Vagina (tissue), 2 donors: ENCODE measurements at regions of chr19 and their contacts with region 1.

Region 1: DNA sequence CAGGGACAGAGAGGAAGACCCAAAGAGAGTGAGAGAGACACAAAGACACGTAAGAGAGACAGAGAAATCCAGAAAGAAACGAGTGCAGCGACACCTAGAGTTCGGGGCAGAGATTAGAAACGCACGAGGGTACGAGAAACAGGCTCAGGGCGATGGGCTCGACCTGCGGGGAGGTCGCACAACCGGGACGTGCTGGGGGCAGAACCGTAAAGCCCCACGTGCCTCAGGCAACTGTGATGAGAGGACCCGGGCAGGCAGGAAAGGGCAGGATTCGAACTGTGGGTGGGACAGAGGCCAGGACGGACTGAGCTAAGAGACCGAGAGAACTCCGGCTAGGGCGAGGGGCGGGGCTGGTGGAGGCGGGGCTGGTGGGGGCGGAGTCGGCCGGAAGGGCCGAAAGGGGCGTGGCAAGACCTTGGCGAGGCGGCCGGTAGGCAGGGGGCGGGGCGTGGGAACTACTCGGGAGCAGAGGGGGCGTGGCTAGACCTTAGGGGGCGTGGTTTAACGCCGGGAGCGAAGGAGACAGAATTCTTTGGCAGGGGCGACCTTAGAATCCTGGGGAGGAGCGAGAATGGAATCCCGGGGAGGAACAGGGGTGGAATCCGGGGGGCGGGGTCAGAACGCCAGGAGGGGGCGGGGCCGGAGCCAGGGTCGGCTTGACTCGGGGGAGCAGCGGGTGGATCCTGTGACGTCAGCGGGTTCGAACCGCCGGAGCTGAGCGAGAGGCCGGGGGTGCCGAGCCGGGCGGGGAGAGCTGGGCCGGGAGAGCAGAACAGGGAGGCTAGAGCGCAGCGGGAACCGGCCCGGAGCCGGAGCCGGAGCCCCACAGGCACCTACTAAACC is at the start of gene NECTIN2:
- DNase-seq: peak; percentile 99
- H3K4me3 ChIP-seq: peak within 1 kb of the TSS; percentile 90 to 97
- H3K27ac ChIP-seq: peak within 1 kb of the TSS; percentile 94
- H3K4me1 ChIP-seq: peaks cover 55% of the 10 kb centered on the region
- H3K27me3 ChIP-seq: no peaks in the 10 kb centered on the region
- CTCF ChIP-seq: peak; percentile 49 to 78 (median 63)
- POLR2A ChIP-seq: peak; percentile 27 to 91
- total RNA-seq, gene NECTIN2: 72.9 TPM

Region 2: GRCh38 chr19:44800461-44800860 is 45.4 kb before region 1 on chr19:
- intact Hi-C with region 1: loop called (anchors 2 kb)
- DNase-seq: no peak
- H3K4me3 ChIP-seq: no peak overlapping the region
- H3K27ac ChIP-seq: no peak overlapping the region
- H3K4me1 ChIP-seq: peaks cover 6% of the 10 kb centered on the region
- H3K27me3 ChIP-seq: no peaks in the 10 kb centered on the region
- CTCF ChIP-seq: peak; percentile 80 to 91 (median 90)
- POLR2A ChIP-seq: no peak

Region 3: DNA sequence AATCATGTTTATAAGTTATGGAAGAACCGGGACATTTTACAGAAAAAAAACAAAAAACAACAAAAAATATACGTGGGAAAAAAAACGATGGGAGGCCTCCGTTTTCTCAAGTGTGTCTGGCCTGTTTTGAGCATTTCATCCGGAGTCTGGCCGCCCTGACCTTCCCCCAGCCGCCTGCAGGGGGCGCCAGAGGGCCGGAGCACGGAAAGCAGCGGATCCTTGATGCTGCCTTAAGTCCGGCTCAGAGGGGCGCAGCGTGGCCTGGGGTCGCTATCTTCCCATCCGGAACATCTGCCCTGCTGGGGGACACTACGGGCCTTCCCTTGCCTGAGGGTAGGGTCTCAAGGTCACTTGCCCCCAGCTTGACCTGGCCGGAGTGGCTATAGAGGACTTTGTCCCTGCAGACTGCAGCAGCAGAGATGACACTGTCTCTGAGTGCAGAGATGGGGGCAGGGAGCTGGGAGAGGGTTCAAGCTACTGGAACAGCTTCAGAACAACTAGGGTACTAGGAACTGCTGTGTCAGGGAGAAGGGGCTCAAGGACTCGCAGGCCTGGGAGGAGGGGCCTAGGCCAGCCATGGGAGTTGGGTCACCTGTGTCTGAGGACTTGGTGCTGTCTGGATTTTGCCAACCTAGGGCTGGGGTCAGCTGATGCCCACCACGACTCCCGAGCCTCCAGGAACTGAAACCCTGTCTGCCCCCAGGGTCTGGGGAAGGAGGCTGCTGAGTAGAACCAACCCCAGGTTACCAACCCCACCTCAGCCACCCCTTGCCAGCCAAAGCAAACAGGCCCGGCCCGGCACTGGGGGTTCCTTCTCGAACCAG is 58.0 kb after region 1 on chr19:
- intact Hi-C with region 1: no loop called
- DNase-seq: no peak
- H3K4me3 ChIP-seq: no peak overlapping the region
- H3K27ac ChIP-seq: no peak overlapping the region
- H3K4me1 ChIP-seq: peaks cover 23% of the 10 kb centered on the region
- H3K27me3 ChIP-seq: no peaks in the 10 kb centered on the region
- CTCF ChIP-seq: peak; percentile 96 to 98 (median 97)
- POLR2A ChIP-seq: no peak

Region 4: DNA sequence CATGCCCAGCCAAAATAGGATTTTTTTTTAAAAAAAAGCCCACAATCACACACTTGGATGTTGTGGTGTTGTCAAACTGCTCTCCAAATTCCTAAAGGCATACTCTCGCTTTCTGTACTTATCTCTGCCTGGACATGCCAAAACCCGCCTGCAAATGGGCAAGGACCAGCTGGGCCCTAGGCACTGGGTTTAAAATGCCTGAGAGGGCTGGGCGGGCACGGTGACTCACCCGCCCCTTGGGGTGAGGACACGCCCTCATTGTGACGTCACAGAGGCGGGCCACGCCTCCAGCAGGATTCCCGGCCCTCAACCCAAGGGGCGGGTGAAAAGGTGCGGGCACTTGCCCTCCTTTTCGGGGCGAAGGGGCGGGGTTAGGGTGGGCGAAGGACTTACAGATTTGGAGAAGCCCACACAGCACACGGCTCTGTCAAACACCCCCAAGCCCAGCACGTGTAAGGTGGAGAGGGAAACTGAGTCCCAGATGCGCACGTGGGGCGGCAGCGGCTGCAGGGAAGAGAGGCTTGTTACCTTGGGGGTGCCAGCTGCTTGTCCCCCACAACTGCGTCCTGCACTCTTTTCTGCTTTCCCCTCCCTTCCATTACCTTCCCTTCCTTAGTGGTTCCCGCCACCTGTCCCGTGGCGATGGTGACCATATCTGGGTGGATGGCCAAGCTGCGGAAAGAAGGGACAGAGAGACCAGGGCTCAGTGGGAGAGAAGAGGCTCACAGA is 786.8 kb after region 1 on chr19:
- intact Hi-C with region 1: no loop called
- DNase-seq: no peak
- H3K4me3 ChIP-seq: no peak overlapping the region
- H3K27ac ChIP-seq: peak overlapping the region; percentile 57
- H3K4me1 ChIP-seq: peaks cover 11% of the 10 kb centered on the region
- H3K27me3 ChIP-seq: no peaks in the 10 kb centered on the region
- CTCF ChIP-seq: no peak
- POLR2A ChIP-seq: no peak